Activated CD8-positive, alpha-beta T cell treated with anti-CD3 and anti-CD28 coated beads for 36 hours (primary cell): ENCODE measurements at regions of chr17 and their contacts with region 1.

Region 1: GRCh38 chr17:48215583-48216139 is 108.1 kb downstream of the SNX11 start:
- DNase-seq: no peak
- ATAC-seq: peak; percentile 45
- H3K4me3 Mint-ChIP-seq: no peak overlapping the region
- H3K27ac Mint-ChIP-seq: no peak overlapping the region
- H3K4me1 Mint-ChIP-seq: peaks cover 14% of the 10 kb centered on the region
- H3K27me3 Mint-ChIP-seq: no peaks in the 10 kb centered on the region
- CTCF ChIP-seq: no peak

Region 2: GRCh38 chr17:48228721-48229120 is 13.1 kb after region 1 on chr17:
- CTCF ChIA-PET with region 1: interaction called, 23 read pairs
- POLR2A ChIA-PET with region 1: interaction called, 4 read pairs
- intact Hi-C with region 1: no loop called
- DNase-seq: no peak
- ATAC-seq: no peak
- H3K4me3 Mint-ChIP-seq: no peak overlapping the region
- H3K27ac Mint-ChIP-seq: no peak overlapping the region
- H3K4me1 Mint-ChIP-seq: peaks cover 19% of the 10 kb centered on the region
- H3K27me3 Mint-ChIP-seq: no peaks in the 10 kb centered on the region
- CTCF ChIP-seq: no peak

Region 3: GRCh38 chr17:48724251-48725003 is 508.8 kb after region 1 on chr17:
- CTCF ChIA-PET with region 1: no interaction called
- POLR2A ChIA-PET with region 1: no interaction called
- intact Hi-C with region 1: no loop called
- DNase-seq: peak; percentile 91
- ATAC-seq: peak; percentile 70
- H3K4me3 Mint-ChIP-seq: peak overlapping the region; percentile 40
- H3K27ac Mint-ChIP-seq: no peak overlapping the region
- H3K4me1 Mint-ChIP-seq: peaks cover 29% of the 10 kb centered on the region
- H3K27me3 Mint-ChIP-seq: peaks cover 88% of the 10 kb centered on the region
- CTCF ChIP-seq: peak; percentile 80